ENCODE measurements at regions of chr3 and their contacts with region 1.

Region 1: GRCh38 chr3:34683851-34684250 is 885.4 kb downstream of the PDCD6IP start:
- DNase-seq: peak in 2 of 3 donors; percentile 79 to 89
- ATAC-seq: peak; percentile 60
- H3K4me3 ChIP-seq: no peak overlapping the region
- H3K4me1 ChIP-seq: no peaks in the 10 kb centered on the region
- CTCF ChIP-seq: no peak

Region 2: GRCh38 chr3:33883538-33883950 is 800.3 kb before region 1 on chr3:
- intact Hi-C with region 1: loop called in 1 of 2 experiments (anchors 10 kb)
- DNase-seq: peak in 1 of 3 donors; percentile 68
- ATAC-seq: peak; percentile 50
- H3K4me3 ChIP-seq: no peak overlapping the region
- H3K4me1 ChIP-seq: peaks cover 3% of the 10 kb centered on the region
- CTCF ChIP-seq: peak; percentile 78

Region 3: DNA sequence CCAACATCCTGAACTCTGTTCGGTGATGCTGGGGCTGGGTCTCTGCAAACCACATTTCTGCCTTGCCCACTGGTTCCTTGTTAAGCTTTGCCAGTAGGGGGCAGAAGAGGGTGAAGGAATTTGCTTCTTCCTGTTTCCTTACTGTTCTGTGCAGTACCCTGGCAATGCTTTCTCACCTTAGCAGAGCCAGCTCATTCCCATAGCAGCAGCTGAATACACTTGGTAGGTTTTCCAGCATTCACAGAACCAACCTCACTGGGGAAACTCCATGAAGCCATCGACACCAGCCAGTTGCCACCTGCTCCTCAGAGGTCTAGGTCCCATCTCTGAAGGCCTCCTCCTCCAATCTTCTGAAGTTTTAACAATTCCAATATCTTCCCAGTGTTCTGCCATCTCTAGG is 577.0 kb before region 1 on chr3:
- intact Hi-C with region 1: loop called in 1 of 2 experiments (anchors 5 kb)
- DNase-seq: peak in 1 of 3 donors; percentile 80
- ATAC-seq: peak; percentile 87
- H3K4me3 ChIP-seq: no peak overlapping the region
- H3K4me1 ChIP-seq: no peaks in the 10 kb centered on the region
- CTCF ChIP-seq: no peak

Measured in mucosa of descending colon (tissue), 3 donors.